Activated CD8-positive, alpha-beta T cell treated with anti-CD3 and anti-CD28 coated beads for 36 hours (primary cell): ENCODE measurements at regions of chr3 and their contacts with region 1.

Region 1: DNA sequence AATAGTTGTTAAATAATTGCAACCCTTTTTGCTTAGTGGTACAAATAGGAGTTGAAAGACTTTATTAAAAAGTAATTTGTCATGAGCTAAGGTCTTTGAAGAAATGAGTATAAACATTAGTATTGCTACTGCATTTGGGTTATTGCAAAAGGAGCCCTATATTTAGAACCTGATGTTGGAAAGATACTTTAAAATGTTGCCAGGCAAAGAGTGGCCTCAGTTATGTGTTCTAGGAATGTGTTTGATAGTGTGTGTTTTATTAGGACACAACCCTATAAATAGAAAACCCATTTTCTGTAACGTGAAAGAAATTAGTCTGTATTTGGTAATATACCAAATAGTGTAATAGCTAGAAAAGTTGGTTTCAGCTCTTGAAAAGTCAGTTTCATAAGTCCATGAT is 10.7 kb downstream of the VPS8 start:
- DNase-seq: no peak
- ATAC-seq: no peak
- H3K4me3 Mint-ChIP-seq: no peak overlapping the region
- H3K27ac Mint-ChIP-seq: no peak overlapping the region
- H3K4me1 Mint-ChIP-seq: peaks cover 12% of the 10 kb centered on the region
- H3K27me3 Mint-ChIP-seq: no peaks in the 10 kb centered on the region
- CTCF ChIP-seq: no peak

Region 2: GRCh38 chr3:184811999-184812661 is 10.5 kb before region 1 on chr3 and contains the start of gene VPS8:
- CTCF ChIA-PET with region 1: interaction called, 10 read pairs
- POLR2A ChIA-PET with region 1: interaction called, 8 read pairs
- intact Hi-C with region 1: no loop called
- DNase-seq: peak; percentile 97
- ATAC-seq: peak; percentile 86
- H3K4me3 Mint-ChIP-seq: peak within 1 kb of the TSS; percentile 81
- H3K27ac Mint-ChIP-seq: peak within 1 kb of the TSS; percentile 92
- H3K4me1 Mint-ChIP-seq: peaks cover 51% of the 10 kb centered on the region
- H3K27me3 Mint-ChIP-seq: no peaks in the 10 kb centered on the region
- CTCF ChIP-seq: peak; percentile 38
- total RNA-seq, gene VPS8: 30.2 to 33.3 TPM